ENCODE measurements at regions of chr1 and their contacts with region 1.

Region 1: DNA sequence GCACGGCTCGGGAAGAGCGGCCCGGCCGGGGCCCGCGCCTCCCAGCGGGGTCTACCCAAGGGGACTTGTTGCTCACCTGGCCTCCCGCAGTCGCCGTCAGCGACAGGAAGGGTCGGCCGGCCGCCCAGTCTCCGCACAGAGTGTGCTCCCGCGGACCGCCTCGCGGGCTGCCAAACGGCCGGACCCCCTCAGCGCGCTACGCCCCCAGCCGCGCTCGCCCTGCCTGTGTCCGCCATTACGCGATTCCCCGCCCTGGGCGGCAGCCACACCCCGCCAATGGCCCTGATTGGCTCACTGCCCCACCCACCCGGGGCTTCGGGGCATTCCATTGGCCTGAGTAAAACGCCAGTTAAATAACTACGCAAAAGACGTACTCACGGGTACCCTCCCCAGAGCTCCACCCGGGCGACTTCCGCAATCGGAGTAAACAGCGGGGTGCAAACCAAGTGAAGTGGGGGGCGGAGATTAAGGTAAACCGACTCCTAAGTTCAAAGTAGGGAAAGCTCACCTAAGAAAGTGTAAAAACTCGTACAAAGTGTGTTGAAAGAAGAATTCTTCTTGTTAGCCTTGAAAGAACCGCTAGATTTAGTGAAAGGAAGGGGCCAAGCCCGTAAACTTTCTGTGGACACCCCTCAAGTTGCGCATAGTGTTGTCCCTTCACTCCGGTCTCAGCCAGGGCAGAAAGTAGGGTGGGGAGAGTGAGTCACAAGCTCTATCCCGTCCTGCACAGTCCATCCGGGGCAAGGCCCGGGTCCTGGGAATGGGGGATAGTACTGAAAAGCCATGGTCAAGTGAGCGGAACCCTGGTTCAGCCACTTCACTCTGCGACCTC is at the start of gene WASF2:
- DNase-seq: peak; percentile 93 to 98 (median 97)
- ATAC-seq: peak; percentile 95
- H3K4me3 ChIP-seq: peak within 1 kb of the TSS; percentile 97 to 99
- H3K4me3 Mint-ChIP-seq: peak within 1 kb of the TSS; percentile 98
- H3K27ac ChIP-seq: peak within 1 kb of the TSS; percentile 93 to 97
- H3K27ac Mint-ChIP-seq: peak within 1 kb of the TSS; percentile 99
- H3K4me1 ChIP-seq: peaks cover 19% of the 10 kb centered on the region
- H3K4me1 Mint-ChIP-seq: peaks cover 35% of the 10 kb centered on the region
- H3K27me3 ChIP-seq: no peaks in the 10 kb centered on the region
- H3K27me3 Mint-ChIP-seq: no peaks in the 10 kb centered on the region
- CTCF ChIP-seq: no peak
- total RNA-seq, gene WASF2: 91.6 to 95.0 TPM

Region 2: DNA sequence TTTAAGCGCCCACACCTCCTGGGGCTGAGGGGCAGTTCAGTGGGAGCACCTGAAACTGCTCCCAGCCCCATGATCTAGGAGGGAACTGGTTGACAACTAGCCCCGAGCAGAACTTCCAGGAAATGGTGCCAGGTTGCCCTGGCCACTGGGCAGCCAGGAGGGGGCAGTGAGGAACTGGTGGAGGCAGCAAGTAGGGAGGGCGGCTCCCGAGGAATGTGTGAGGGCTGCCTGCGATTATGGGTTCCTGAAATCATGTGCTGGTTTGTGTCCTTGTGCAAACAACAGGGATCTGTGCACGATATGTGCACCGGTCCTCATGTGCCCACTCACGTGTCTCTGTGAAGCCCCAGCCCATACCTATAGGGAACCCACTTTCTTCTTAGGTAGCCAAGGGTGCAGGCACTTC is 87.8 kb before region 1 on chr1:
- CTCF ChIA-PET with region 1: no interaction called
- POLR2A ChIA-PET with region 1: interaction called, 5 read pairs
- intact Hi-C with region 1: loop called in 1 of 2 experiments (anchors 2 kb)
- DNase-seq: peak in 3 of 9 experiments; percentile 23 to 50 (median 27)
- ATAC-seq: no peak
- H3K4me3 ChIP-seq: no peak overlapping the region
- H3K4me3 Mint-ChIP-seq: no peak overlapping the region
- H3K27ac ChIP-seq: peak overlapping the region in 1 of 2 experiments; percentile 31
- H3K27ac Mint-ChIP-seq: peak overlapping the region; percentile 91
- H3K4me1 ChIP-seq: peaks cover 19% of the 10 kb centered on the region
- H3K4me1 Mint-ChIP-seq: peaks cover 32% of the 10 kb centered on the region
- H3K27me3 ChIP-seq: no peaks in the 10 kb centered on the region
- H3K27me3 Mint-ChIP-seq: no peaks in the 10 kb centered on the region
- CTCF ChIP-seq: no peak

Region 3: DNA sequence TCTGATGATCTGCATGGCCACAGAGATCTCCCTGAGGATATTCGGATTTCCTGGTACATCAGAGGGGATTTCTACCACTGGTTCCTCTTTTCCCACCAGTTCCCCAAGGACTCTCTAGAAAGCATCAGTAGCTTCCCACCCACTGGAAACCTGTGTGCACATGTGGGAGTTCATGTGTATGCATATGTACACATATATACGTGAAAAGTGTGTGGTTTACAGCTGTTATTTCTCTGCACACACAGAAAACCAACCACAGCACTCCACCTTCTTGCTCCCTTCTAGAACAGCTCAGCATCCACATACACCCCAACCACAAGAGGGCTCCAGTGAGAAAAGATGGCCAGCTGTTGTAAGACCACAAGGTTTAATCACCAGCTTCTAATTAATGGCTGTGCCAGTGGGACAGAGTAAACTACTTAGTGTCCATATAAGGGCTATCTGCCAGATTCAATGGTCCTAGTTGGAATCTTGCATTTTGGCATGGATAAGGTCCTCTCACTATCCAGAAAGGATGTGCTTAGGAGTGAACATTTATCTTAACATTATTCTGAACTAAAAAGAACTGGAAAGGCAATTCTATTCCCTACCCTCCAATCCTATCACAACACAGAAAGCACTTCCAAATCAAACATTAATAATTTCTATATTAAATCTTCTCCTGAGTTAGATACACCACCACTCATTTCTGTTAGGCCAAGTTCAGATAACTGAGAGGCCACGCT is 73.6 kb before region 1 on chr1:
- CTCF ChIA-PET with region 1: no interaction called
- POLR2A ChIA-PET with region 1: interaction called, 3 read pairs
- intact Hi-C with region 1: loop called (anchors 1 to 5 kb)
- DNase-seq: peak in 6 of 9 experiments; percentile 30 to 81 (median 57)
- ATAC-seq: peak; percentile 74
- H3K4me3 ChIP-seq: no peak overlapping the region
- H3K4me3 Mint-ChIP-seq: no peak overlapping the region
- H3K27ac ChIP-seq: no peak overlapping the region
- H3K27ac Mint-ChIP-seq: peak overlapping the region; percentile 37
- H3K4me1 ChIP-seq: peaks cover 19% of the 10 kb centered on the region
- H3K4me1 Mint-ChIP-seq: peaks cover 33% of the 10 kb centered on the region
- H3K27me3 ChIP-seq: no peaks in the 10 kb centered on the region
- H3K27me3 Mint-ChIP-seq: no peaks in the 10 kb centered on the region
- CTCF ChIP-seq: peak; percentile 56

Region 4: DNA sequence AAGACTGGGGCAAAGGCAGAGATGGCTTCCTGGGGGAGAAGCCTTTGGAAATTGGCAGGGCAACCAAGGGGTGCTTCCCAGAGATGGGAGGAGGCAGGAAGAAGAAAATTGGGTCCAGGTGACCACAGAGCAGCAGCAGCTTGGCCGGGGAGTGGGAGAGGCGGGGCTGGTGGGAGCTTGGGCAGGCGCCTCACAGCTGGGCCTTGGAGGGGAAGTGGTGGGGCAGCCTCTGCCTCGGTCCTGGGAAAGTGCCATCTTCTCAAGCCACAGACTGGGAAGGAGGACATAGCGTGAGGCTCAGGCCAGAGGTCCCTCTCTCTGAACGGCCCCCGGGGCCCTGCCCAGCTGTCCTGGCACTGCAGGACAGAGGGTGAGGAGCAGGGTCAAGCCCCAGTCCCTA is 23.8 kb after region 1 on chr1:
- CTCF ChIA-PET with region 1: interaction called, 3 read pairs
- POLR2A ChIA-PET with region 1: interaction called, 3 read pairs
- intact Hi-C with region 1: loop called in 1 of 2 experiments (anchors 2 kb)
- DNase-seq: no peak
- ATAC-seq: no peak
- H3K4me3 ChIP-seq: no peak overlapping the region
- H3K4me3 Mint-ChIP-seq: no peak overlapping the region
- H3K27ac ChIP-seq: no peak overlapping the region
- H3K27ac Mint-ChIP-seq: no peak overlapping the region
- H3K4me1 ChIP-seq: peaks cover 14% of the 10 kb centered on the region
- H3K4me1 Mint-ChIP-seq: peaks cover 19% of the 10 kb centered on the region
- H3K27me3 ChIP-seq: no peaks in the 10 kb centered on the region
- H3K27me3 Mint-ChIP-seq: no peaks in the 10 kb centered on the region
- CTCF ChIP-seq: no peak

Region 5: DNA sequence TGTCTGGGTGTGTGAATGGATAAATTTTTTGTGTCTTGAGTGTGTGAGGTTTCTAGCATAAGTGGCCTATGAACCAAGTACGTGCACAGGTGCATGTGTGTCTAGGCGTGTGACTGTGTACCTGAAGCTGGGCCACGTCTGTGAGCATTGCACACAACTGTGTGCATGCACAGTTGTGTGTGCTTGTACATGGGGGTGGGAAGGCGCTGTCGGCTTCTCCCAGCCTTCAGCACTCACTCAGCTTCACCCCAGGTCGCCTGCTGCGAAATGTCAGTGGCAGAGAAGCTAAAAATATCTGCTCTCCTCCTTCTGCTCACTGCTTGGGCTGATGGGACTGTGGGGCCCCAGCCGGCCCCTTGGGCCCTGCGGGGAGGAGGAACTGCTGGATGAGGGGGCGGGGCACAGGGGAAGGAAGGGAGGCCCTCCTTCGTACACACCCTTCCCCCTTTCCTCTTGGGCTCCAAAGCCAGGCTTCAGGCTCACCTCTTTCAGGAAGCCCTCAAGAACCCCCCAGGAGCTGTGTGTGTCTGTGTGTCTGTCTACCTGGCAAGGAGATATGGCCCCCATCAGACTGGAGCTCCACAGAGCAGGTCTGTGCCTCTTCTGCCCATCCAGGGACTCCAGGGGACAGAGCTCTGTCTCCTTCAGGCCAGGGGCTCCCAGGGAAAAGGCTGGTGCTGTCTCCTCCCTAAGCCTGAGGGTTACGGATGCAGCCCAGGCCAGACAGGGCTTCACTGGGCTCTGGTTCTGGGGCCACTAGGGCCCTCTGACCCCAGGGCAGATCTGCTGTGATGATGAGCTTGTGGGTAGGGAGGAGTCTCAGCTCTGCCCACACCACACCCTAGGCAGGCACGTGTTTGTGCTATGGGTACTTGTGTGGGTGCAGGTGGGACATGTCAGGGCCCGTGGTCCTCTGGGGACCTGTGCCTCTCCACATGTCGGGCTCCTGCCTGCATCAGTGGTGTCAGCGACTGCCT is 35.5 kb after region 1 on chr1:
- CTCF ChIA-PET with region 1: interaction called, 4 read pairs
- POLR2A ChIA-PET with region 1: interaction called, 24 read pairs
- intact Hi-C with region 1: loop called (anchors 1 to 2 kb)
- DNase-seq: peak in 8 of 9 experiments; percentile 25 to 74 (median 49)
- ATAC-seq: no peak
- H3K4me3 ChIP-seq: peak overlapping the region; percentile 21 to 47
- H3K4me3 Mint-ChIP-seq: peak overlapping the region; percentile 66
- H3K27ac ChIP-seq: peak overlapping the region; percentile 63 to 66
- H3K27ac Mint-ChIP-seq: peak overlapping the region; percentile 85
- H3K4me1 ChIP-seq: peaks cover 63% of the 10 kb centered on the region
- H3K4me1 Mint-ChIP-seq: peaks cover 73% of the 10 kb centered on the region
- H3K27me3 ChIP-seq: no peaks in the 10 kb centered on the region
- H3K27me3 Mint-ChIP-seq: no peaks in the 10 kb centered on the region
- CTCF ChIP-seq: no peak

Region 6: DNA sequence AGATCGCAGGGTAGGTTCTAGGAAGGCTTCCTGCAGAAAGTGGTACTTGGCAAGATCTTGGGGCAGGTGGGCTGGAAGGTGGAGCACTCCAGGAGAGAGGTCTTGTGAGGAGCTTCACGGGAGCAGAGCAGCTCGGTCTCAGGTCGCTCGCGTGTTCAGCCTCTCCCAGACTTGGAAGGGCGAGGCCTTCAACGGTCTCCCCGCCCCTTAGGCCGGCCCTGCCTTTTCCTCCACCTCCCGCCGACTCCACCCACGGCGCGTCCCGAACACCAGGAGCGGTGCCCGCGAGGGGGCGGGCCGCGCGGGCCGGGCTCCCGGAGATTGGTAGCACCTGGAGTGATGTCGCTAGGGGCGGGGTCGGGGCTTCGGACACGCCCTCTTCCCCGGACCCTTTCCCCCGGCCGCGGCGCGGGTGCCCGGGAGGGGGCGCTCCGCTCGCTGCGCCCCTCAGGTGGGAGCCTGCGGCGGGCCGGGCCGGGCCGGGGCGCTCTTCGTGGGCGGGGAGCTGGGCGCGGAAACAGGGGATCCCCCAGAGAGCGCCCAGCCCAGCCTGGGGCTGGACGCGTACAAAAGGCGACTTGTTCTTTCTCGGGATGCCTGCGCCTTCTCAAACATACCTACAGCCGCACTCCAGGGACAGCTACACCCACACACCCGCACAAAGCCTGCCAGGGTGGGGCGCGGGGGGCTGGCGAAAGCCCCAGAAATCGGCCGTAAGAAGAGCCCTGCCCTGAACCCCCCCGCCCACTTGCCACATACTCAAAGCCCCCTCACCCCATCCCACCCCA is 78.4 kb after region 1 on chr1:
- CTCF ChIA-PET with region 1: no interaction called
- POLR2A ChIA-PET with region 1: no interaction called
- intact Hi-C with region 1: loop called in 1 of 2 experiments (anchors 1 kb)
- DNase-seq: peak; percentile 80 to 96 (median 91)
- ATAC-seq: peak; percentile 92
- H3K4me3 ChIP-seq: peak overlapping the region; percentile 28 to 36
- H3K4me3 Mint-ChIP-seq: peak overlapping the region; percentile 78
- H3K27ac ChIP-seq: peak overlapping the region in 1 of 2 experiments; percentile 58
- H3K27ac Mint-ChIP-seq: peak overlapping the region; percentile 39
- H3K4me1 ChIP-seq: peaks cover 16% of the 10 kb centered on the region
- H3K4me1 Mint-ChIP-seq: peaks cover 25% of the 10 kb centered on the region
- H3K27me3 ChIP-seq: no peaks in the 10 kb centered on the region
- H3K27me3 Mint-ChIP-seq: no peaks in the 10 kb centered on the region
- CTCF ChIP-seq: peak; percentile 71